ENCODE measurements at regions of chr12 and their contacts with region 1.

Region 1: DNA sequence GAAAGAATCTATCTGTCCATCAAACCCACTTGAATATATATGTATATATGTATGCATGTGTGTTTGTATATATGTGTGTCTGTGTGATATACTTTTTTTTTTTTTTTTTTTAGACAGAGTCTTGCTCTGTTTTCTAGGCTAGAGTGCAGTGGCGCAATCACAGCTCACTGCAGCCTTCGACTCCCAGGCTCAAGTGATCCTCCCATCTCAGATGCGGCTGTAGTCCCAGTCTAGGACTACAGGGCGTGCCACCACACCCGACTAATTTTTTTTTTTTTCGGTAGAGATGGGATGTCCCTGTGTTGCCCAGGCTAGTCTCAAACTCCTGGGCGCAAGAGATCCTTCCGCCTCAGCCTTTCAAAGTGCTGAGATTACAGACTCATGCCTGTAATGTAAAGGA is 13.0 kb upstream of the APOBEC1 start:
- DNase-seq: no peak
- H3K4me3 ChIP-seq: no peak overlapping the region
- H3K27ac ChIP-seq: no peak overlapping the region
- H3K4me1 ChIP-seq: 0 out of 7 replicates have a peak, but pooled peaks cover 0 to 2% (median 0%) of the 10 kb centered on the region in 4 experiments
- H3K27me3 ChIP-seq: no peaks in the 10 kb centered on the region
- CTCF ChIP-seq: no peak
- EP300 ChIP-seq: no peak
- POLR2A ChIP-seq: no peak
- RAD21 ChIP-seq: no peak

Region 2: DNA sequence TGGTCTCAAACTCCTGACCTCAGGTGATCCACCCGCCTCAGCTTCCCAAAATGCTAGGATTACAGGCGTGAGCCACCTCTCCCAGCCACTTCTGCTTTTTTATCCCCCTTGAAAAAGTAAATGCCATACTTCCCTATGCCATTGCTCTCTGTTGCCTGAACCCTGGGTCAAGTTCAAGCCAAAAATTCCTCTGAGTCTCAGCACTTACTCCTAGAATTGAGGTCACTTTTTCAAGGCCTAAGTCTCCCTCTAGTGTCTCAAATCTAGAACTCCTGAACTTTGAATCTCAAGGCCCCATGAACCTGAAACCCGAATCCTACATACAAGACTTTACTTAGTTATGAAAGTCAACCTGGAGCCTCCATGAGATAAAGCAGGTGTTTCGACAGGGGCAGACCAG is 11.6 kb before region 1 on chr12:
- CTCF ChIA-PET with region 1: interaction called, 10 read pairs
- POLR2A ChIA-PET with region 1: no interaction called
- DNase-seq: no peak
- H3K4me3 ChIP-seq: no peak overlapping the region
- H3K27ac ChIP-seq: no peak overlapping the region
- H3K4me1 ChIP-seq: no peaks in the 10 kb centered on the region
- H3K27me3 ChIP-seq: no peaks in the 10 kb centered on the region; a peak in 1 of 7 replicates
- CTCF ChIP-seq: peak in 2 of 3 experiments; percentile 44 to 60; a peak in 2 of 4 replicates
- EP300 ChIP-seq: no peak
- POLR2A ChIP-seq: no peak
- RAD21 ChIP-seq: peak; percentile 53 to 68